Activated T-helper 1 cell treated with anti-CD3 and anti-CD28 coated beads, Interleukin-12 subunit alpha, Interleukin-12 subunit beta, Interleukin-2, Interleukin-4 antibody, amounts not matched to agents 30 ng/mL and 10 ng/mL and 1 ng/mL, durations not matched to agents 14 hours and 24 hours and 36 hours (primary cell): ENCODE measurements at regions of chr6 and their contacts with region 1.

Region 1: GRCh38 chr6:14210663-14211561 is 93.3 kb downstream of the CD83 start:
- DNase-seq: peak; percentile 91
- H3K4me3 Mint-ChIP-seq: peak overlapping the region; percentile 80
- H3K27ac Mint-ChIP-seq: peak overlapping the region; percentile 70
- H3K4me1 Mint-ChIP-seq: peaks cover 29% of the 10 kb centered on the region
- H3K27me3 Mint-ChIP-seq: peaks cover 6% of the 10 kb centered on the region

Region 2: GRCh38 chr6:14316635-14317386 is 105.9 kb after region 1 on chr6:
- intact Hi-C with region 1: no loop called
- DNase-seq: no peak
- H3K4me3 Mint-ChIP-seq: no peak overlapping the region
- H3K27ac Mint-ChIP-seq: no peak overlapping the region
- H3K4me1 Mint-ChIP-seq: peaks cover 15% of the 10 kb centered on the region
- H3K27me3 Mint-ChIP-seq: peaks cover 2% of the 10 kb centered on the region

Region 3: GRCh38 chr6:14542670-14543366 is 331.9 kb after region 1 on chr6:
- intact Hi-C with region 1: loop called (anchors 5 kb)
- DNase-seq: peak; percentile 10
- H3K4me3 Mint-ChIP-seq: no peak overlapping the region
- H3K27ac Mint-ChIP-seq: peak overlapping the region; percentile 64
- H3K4me1 Mint-ChIP-seq: peaks cover 26% of the 10 kb centered on the region
- H3K27me3 Mint-ChIP-seq: peaks cover 1% of the 10 kb centered on the region

Region 4: GRCh38 chr6:14660806-14661579 is 450.1 kb after region 1 on chr6:
- intact Hi-C with region 1: loop called (anchors 2 kb)
- DNase-seq: peak; percentile 59
- H3K4me3 Mint-ChIP-seq: no peak overlapping the region
- H3K27ac Mint-ChIP-seq: no peak overlapping the region
- H3K4me1 Mint-ChIP-seq: peaks cover 59% of the 10 kb centered on the region
- H3K27me3 Mint-ChIP-seq: peaks cover 16% of the 10 kb centered on the region

Region 5: DNA sequence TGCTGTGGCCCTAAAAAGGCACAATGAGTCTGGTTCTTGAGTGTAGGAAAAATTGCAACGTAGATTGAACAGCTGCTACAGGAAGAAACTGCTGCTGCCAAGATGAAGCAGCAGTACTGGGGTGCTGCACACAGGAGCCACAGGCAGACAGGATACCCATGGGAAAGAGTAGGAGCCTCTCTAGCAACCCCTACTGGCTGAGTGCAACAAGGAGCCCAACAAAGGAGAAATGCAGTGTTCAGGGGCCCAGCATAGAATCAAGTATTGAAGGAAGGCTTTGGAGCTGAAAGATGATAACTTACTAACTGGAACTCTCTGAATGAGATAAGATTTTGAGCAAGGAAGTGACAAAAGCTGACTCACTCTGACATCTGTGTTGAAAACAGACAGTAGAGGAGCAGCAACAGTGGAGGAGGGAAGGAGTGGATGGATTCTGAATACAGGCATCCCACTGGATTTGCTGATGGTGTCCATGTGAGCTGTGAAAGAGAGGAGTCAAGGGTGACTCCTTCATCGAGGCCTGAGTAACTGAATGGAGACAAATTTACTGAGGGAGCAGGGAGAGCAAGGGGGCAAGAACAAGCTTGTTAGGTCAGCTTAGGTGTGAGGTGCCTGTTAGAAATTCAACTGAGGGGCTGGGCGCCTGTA is 500.3 kb after region 1 on chr6:
- intact Hi-C with region 1: loop called (anchors 1 kb)
- DNase-seq: peak; percentile 56
- H3K4me3 Mint-ChIP-seq: peak overlapping the region; percentile 19
- H3K27ac Mint-ChIP-seq: peak overlapping the region; percentile 92
- H3K4me1 Mint-ChIP-seq: peaks cover 36% of the 10 kb centered on the region
- H3K27me3 Mint-ChIP-seq: peaks cover 4% of the 10 kb centered on the region

Region 6: GRCh38 chr6:15184441-15184861 is 973.5 kb after region 1 on chr6:
- intact Hi-C with region 1: loop called (anchors 2 kb)
- DNase-seq: peak; percentile 25
- H3K4me3 Mint-ChIP-seq: no peak overlapping the region
- H3K27ac Mint-ChIP-seq: peak overlapping the region; percentile 94
- H3K4me1 Mint-ChIP-seq: peaks cover 16% of the 10 kb centered on the region
- H3K27me3 Mint-ChIP-seq: no peaks in the 10 kb centered on the region

Region 7: DNA sequence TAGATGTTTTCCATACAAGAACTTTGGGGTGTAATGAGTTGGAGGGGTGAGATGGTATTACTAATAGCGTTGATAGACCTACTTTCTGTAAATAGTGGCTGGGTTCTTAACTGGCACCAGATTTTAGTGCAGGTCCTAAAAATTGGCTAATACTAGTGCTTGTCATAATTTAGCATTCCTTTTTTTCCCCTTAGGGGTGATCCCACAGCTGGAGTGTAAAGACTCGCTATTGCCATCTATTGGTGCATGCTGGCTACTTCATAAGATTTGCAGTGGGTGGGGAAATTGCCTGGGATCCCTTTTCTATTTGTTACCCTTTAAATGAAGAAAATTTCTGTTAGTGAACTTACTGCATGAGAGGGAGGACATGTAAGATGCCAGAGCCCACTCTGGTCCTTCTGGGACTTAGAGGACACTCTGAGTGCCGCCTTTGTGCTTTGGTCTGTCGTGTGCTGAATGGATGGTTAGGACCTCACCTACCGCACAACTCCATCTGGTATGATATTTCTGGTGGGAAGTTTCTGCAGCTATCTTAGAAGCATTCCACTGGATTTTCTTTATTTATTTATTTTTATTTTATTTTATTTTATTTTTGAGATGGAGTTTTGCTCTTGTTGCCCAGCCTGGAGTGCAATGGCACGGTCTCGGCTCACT is 1230.4 kb after region 1 on chr6:
- intact Hi-C with region 1: loop called (anchors 10 kb)
- DNase-seq: no peak
- H3K4me3 Mint-ChIP-seq: no peak overlapping the region
- H3K27ac Mint-ChIP-seq: no peak overlapping the region
- H3K4me1 Mint-ChIP-seq: peaks cover 83% of the 10 kb centered on the region
- H3K27me3 Mint-ChIP-seq: no peaks in the 10 kb centered on the region

Region 8: DNA sequence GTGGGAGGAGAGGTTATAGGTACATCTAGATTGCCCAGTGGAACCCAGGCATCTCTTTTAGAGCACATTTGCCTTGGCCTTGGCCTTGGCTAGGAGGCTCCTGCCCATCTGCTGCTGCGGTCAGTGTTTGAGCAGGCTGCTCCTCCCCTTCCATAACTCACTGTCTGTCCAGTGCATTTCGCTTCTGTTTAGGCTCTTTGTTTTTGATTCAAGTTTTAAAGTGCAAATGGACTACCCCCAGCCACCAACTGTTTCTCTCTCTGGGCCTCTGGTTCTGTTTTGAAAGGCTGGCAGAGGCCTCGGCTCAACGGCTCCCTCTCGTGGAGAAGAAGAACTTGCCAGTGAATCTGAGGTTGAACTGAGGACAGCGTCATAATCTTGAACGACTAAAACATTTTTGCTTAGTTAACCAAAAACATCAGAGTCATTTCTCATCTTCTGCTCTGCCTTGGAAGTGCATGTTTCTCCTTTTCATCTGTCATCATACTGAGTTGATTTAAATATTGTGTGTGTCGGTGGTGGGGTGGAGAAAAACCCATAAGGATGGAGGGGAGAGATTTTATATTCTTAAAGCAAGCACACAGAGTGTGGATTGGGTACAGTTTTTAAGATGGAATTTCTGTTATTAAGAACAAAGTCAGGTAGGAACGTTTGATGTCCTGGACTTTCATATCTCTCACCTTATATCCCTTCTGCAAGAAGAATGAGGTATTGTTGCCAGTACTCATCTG is 1280.5 kb after region 1 on chr6:
- intact Hi-C with region 1: loop called (anchors 2 kb)
- DNase-seq: peak; percentile 55
- H3K4me3 Mint-ChIP-seq: no peak overlapping the region
- H3K27ac Mint-ChIP-seq: peak overlapping the region; percentile 77
- H3K4me1 Mint-ChIP-seq: peaks cover 31% of the 10 kb centered on the region
- H3K27me3 Mint-ChIP-seq: peaks cover 1% of the 10 kb centered on the region